Activated B cell treated with CpG ODN at 0.5 μM for 24 hours (primary cell): ENCODE measurements at regions of chr5 and their contacts with region 1.

Region 1: GRCh38 chr5:127313847-127314473 is 23.4 kb downstream of the MEGF10 start:
- DNase-seq: peak; percentile 50
- ATAC-seq: peak; percentile 75
- H3K4me3 Mint-ChIP-seq: no peak overlapping the region
- H3K27ac Mint-ChIP-seq: no peak overlapping the region
- H3K4me1 Mint-ChIP-seq: peaks cover 2% of the 10 kb centered on the region
- H3K27me3 Mint-ChIP-seq: peaks cover 8% of the 10 kb centered on the region
- CTCF ChIP-seq: no peak

Region 2: GRCh38 chr5:126656396-126657007 is 657.5 kb before region 1 on chr5:
- CTCF ChIA-PET with region 1: interaction called, 5 read pairs
- POLR2A ChIA-PET with region 1: no interaction called
- intact Hi-C with region 1: loop called (anchors 1 kb)
- DNase-seq: no peak
- ATAC-seq: no peak
- H3K4me3 Mint-ChIP-seq: no peak overlapping the region
- H3K27ac Mint-ChIP-seq: no peak overlapping the region
- H3K4me1 Mint-ChIP-seq: peaks cover 6% of the 10 kb centered on the region
- H3K27me3 Mint-ChIP-seq: peaks cover 2% of the 10 kb centered on the region
- CTCF ChIP-seq: peak; percentile 51

Region 3: DNA sequence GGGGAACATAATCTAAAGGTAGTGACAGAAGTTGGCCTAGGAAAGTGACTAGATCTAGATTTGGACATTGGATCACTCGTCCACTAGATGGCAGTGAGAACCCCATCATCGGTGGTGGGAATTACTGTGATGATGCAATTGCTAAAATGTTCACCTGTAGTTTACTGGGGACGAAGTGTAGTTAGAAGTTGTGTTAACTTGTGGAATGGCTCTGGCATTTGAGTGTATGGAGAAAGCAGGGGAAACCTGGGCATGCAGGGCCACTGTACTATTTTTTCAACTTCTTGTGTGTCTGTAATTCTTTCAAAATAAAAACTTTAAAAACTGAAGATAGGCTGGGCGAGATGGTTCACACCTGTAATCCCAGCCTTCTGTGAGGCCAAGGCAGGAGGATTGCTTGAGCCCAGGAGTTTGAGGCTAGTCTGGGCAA is 637.8 kb before region 1 on chr5:
- CTCF ChIA-PET with region 1: no interaction called
- POLR2A ChIA-PET with region 1: no interaction called
- intact Hi-C with region 1: loop called (anchors 1 kb)
- DNase-seq: peak; percentile 19
- ATAC-seq: peak; percentile 82
- H3K4me3 Mint-ChIP-seq: no peak overlapping the region
- H3K27ac Mint-ChIP-seq: peak overlapping the region; percentile 4
- H3K4me1 Mint-ChIP-seq: peaks cover 3% of the 10 kb centered on the region
- H3K27me3 Mint-ChIP-seq: no peaks in the 10 kb centered on the region
- CTCF ChIP-seq: peak; percentile 67

Region 4: GRCh38 chr5:126808521-126808988 is 505.4 kb before region 1 on chr5:
- CTCF ChIA-PET with region 1: no interaction called
- POLR2A ChIA-PET with region 1: no interaction called
- intact Hi-C with region 1: loop called (anchors 1 kb)
- DNase-seq: no peak
- ATAC-seq: peak; percentile 66
- H3K4me3 Mint-ChIP-seq: peak overlapping the region; percentile 66
- H3K27ac Mint-ChIP-seq: peak overlapping the region; percentile 81
- H3K4me1 Mint-ChIP-seq: peaks cover 63% of the 10 kb centered on the region
- H3K27me3 Mint-ChIP-seq: no peaks in the 10 kb centered on the region
- CTCF ChIP-seq: peak; percentile 35

Region 5: DNA sequence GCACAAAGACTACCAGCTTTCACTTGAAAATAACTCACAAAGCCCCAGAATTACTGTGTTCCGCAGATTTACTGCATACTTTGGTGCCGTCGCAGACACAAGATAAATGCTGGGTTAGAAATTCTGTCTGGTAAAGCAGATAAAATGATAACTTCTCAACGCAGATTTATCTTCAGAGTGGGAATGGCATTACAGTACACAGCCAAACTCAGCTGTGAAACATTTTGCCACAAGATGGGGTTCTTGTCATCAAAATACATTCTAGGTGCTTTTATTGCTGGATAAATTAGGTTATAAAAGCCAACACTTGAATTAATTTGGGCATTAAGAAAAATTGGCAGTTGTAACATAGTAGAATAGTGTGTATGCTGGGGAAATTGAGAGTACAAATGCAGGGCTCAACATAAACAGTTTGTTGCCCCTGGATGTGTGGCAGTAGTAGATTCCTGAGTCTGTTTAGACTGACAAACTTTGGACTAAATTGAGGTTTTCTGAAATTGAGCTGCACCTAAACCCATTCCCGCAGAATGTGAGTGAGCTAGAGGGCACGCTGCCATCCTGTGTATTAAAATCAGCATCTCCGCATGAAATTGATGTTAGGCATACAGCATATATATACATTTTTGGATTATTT is 475.9 kb before region 1 on chr5:
- CTCF ChIA-PET with region 1: interaction called, 18 read pairs
- POLR2A ChIA-PET with region 1: interaction called, 3 read pairs
- intact Hi-C with region 1: loop called (anchors 1 kb)
- DNase-seq: no peak
- ATAC-seq: peak; percentile 28
- H3K4me3 Mint-ChIP-seq: no peak overlapping the region
- H3K27ac Mint-ChIP-seq: no peak overlapping the region
- H3K4me1 Mint-ChIP-seq: no peaks in the 10 kb centered on the region
- H3K27me3 Mint-ChIP-seq: no peaks in the 10 kb centered on the region
- CTCF ChIP-seq: no peak

Region 6: GRCh38 chr5:126917918-126918614 is 395.9 kb before region 1 on chr5:
- CTCF ChIA-PET with region 1: no interaction called
- POLR2A ChIA-PET with region 1: no interaction called
- intact Hi-C with region 1: loop called (anchors 10 kb)
- DNase-seq: no peak
- ATAC-seq: no peak
- H3K4me3 Mint-ChIP-seq: no peak overlapping the region
- H3K27ac Mint-ChIP-seq: no peak overlapping the region
- H3K4me1 Mint-ChIP-seq: peaks cover 16% of the 10 kb centered on the region
- H3K27me3 Mint-ChIP-seq: no peaks in the 10 kb centered on the region
- CTCF ChIP-seq: no peak

Region 7: GRCh38 chr5:127216898-127217675 is 96.9 kb before region 1 on chr5:
- CTCF ChIA-PET with region 1: no interaction called
- POLR2A ChIA-PET with region 1: no interaction called
- intact Hi-C with region 1: no loop called
- DNase-seq: no peak
- ATAC-seq: no peak
- H3K4me3 Mint-ChIP-seq: no peak overlapping the region
- H3K27ac Mint-ChIP-seq: no peak overlapping the region
- H3K4me1 Mint-ChIP-seq: no peaks in the 10 kb centered on the region
- H3K27me3 Mint-ChIP-seq: peaks cover 8% of the 10 kb centered on the region
- CTCF ChIP-seq: no peak